Activated T-helper 1 cell treated with anti-CD3 and anti-CD28 coated beads, Interleukin-12 subunit alpha, Interleukin-12 subunit beta, Interleukin-2, Interleukin-4 antibody, amounts not matched to agents 30 ng/mL and 10 ng/mL and 1 ng/mL, durations not matched to agents 14 hours and 24 hours and 36 hours (primary cell): ENCODE measurements at regions of chr19 and their contacts with region 1.

Region 1: GRCh38 chr19:46600384-46601317 is 479 bp upstream of the CALM3 start:
- DNase-seq: peak; percentile 96
- H3K4me3 Mint-ChIP-seq: peak overlapping the region; percentile 100
- H3K27ac Mint-ChIP-seq: peak overlapping the region; percentile 100
- H3K4me1 Mint-ChIP-seq: peaks cover 19% of the 10 kb centered on the region
- H3K27me3 Mint-ChIP-seq: peaks cover 5% of the 10 kb centered on the region

Region 2: GRCh38 chr19:46466536-46467196 is 134.0 kb before region 1 on chr19:
- intact Hi-C with region 1: no loop called
- DNase-seq: no peak
- H3K4me3 Mint-ChIP-seq: no peak overlapping the region
- H3K27ac Mint-ChIP-seq: no peak overlapping the region
- H3K4me1 Mint-ChIP-seq: no peaks in the 10 kb centered on the region
- H3K27me3 Mint-ChIP-seq: peaks cover 16% of the 10 kb centered on the region

Region 3: GRCh38 chr19:46614114-46614722 is 13.6 kb after region 1 on chr19:
- intact Hi-C with region 1: loop called (anchors 1 kb)
- DNase-seq: peak; percentile 63
- H3K4me3 Mint-ChIP-seq: peak overlapping the region; percentile 64
- H3K27ac Mint-ChIP-seq: peak overlapping the region; percentile 92
- H3K4me1 Mint-ChIP-seq: peaks cover 74% of the 10 kb centered on the region
- H3K27me3 Mint-ChIP-seq: no peaks in the 10 kb centered on the region

Region 4: GRCh38 chr19:46661020-46661731 is 60.5 kb after region 1 on chr19 and contains the start of gene DACT3:
- intact Hi-C with region 1: loop called (anchors 1 kb)
- DNase-seq: peak; percentile 100
- H3K4me3 Mint-ChIP-seq: peak within 1 kb of the TSS; percentile 72
- H3K27ac Mint-ChIP-seq: peak within 1 kb of the TSS; percentile 81
- H3K4me1 Mint-ChIP-seq: peaks cover 19% of the 10 kb centered on the region
- H3K27me3 Mint-ChIP-seq: peaks cover 43% of the 10 kb centered on the region
- total RNA-seq, gene DACT3: 4.3 and 5.7 TPM in 2 replicates

Region 5: DNA sequence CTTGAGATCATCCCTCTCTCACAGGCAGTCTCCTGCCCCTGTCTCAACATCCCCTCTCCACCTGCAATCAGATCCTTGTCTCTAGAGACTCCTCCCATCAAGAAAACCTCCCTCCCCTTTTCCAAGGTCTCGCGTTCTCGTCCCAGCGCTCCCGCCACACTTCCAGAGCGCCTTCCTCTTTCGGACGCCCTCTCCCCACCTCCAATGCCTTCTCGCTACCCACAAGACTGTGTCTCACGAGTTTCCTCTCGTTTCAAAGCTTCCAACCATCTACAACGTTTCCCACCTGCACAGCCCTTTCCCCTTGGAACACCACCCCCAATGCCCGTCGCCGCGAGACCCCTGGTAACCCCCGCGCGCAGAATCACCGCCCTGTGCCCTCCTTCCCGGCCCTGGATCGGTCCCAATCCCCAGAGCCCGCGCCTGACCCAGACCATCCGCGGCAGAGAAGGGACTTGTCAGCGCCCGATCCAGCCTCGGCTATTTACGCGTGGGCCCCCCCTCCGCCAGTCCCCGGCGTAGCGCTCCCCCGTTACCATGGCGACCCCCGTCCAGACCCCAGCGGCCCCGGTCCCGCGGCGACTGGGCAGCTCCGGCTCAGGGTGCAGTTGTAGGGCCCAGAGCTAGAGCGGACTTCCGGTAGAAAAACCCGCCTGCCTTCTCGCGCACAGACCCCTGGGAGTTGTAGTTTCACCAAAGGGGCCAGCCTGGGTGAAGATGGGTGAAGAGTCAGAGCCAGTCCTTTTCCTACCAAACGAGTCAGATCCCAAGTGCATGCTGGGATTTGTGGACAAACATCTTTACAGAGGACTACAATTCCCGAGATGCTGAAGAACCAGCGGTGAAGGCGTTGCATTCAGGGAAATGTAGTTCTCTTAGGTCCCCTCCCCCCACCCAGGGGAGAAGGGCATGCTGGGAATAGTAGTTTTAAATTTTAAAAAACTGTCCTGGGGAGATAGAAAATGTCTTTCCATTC is 249.9 kb after region 1 on chr19 and contains the start of gene AP2S1:
- intact Hi-C with region 1: loop called (anchors 2 kb)
- DNase-seq: peak; percentile 92
- H3K4me3 Mint-ChIP-seq: peak within 1 kb of the TSS; percentile 92
- H3K27ac Mint-ChIP-seq: peak within 1 kb of the TSS; percentile 86
- H3K4me1 Mint-ChIP-seq: peaks cover 24% of the 10 kb centered on the region
- H3K27me3 Mint-ChIP-seq: peaks cover 6% of the 10 kb centered on the region
- total RNA-seq, gene AP2S1: 96.4 and 98.1 TPM in 2 replicates